Right ventricle myocardium superior (tissue), 1 donor: ENCODE measurements at regions of chr7 and their contacts with region 1.

Region 1: DNA sequence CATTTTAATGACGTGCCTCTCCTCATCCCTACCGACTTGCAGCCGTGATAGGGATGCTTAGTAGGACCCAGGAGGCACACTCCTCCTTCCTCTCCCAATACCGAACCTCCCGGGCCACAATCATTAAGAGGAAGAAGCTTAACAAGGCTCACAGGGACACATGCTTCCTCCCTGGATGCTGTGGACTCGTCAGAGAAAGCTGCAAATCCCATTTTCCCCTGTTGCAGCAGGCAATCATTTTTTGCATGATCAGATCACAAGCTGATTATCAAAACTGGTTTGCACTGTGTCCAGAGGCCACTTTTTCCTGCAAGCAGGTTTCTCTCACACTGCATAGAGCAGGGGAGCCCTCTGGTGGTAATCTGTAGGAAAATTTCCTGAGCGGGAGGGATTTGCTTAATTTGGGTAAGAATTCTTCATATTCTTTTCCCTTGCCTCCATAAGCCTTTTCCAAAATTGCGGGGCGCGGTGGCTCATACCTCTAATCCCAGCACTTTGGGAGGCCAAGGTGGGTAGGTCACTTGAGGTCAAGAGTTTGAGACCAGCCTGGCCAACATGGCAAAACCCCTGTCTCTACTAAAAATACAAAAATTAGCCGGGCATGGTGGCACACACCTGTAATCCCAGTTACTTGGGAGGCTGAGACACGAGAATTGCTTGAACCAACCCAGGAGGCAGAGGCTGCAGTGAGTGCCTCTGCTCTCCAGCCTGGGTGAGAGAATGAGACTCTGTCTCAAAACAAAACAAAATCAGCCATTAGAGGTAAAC is 16.1 kb upstream of the LAMB4 start:
- DNase-seq: no peak
- ATAC-seq: peak; percentile 94

Region 2: DNA sequence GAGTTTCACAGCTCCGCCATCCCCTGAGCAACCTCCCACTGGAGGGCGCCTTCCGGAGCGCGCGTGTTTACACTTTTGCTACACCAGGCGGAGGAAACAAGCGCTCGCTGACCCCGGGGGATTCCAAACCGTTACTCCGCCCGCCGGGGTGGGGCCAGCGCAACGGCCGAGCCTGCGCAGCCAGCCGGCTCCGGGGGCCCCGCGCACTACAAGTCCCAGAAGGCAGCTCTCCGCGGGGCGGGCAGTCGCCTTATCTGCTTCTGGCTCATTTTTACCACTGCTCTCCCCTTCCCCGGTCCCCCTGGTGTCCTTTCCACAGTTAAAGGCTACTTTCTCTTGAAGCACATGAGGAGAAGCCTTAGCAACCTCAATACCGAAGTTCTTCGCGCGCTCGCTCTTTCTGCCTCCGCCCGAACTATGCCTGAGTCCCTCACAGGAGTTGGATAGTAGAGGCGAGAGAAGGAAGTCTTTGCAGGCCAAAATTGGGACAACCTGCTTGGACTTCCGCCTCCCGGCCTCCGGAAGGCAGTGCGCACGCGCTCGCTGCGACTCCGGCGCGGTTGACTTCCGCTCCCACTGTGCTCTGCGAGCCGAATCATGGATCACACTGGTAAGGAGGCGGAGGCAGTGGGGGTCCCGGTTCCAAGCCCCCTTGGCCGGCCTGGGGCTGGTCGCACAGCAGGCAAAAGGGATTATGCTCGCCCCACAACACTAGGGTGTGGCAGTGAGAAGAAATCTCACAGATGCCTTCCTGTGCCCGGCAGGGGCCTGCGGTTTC is 402.5 kb before region 1 on chr7 and contains the start of gene CBLL1:
- intact Hi-C with region 1: loop called (anchors 10 kb)
- DNase-seq: peak; percentile 98
- ATAC-seq: peak; percentile 99
- total RNA-seq, gene CBLL1: 18.9 TPM

Region 3: GRCh38 chr7:107879400-107880035 is 266.7 kb before region 1 on chr7:
- intact Hi-C with region 1: loop called (anchors 5 kb)
- DNase-seq: no peak
- ATAC-seq: peak; percentile 80

Region 4: GRCh38 chr7:107939573-107940489 is 206.4 kb before region 1 on chr7:
- intact Hi-C with region 1: loop called (anchors 10 kb)
- DNase-seq: peak; percentile 79
- ATAC-seq: peak; percentile 58

Region 5: GRCh38 chr7:108109221-108109908 is 36.9 kb before region 1 on chr7:
- intact Hi-C with region 1: loop called (anchors 5 kb)
- DNase-seq: no peak
- ATAC-seq: peak; percentile 51